Activated B cell treated with CpG ODN at 0.5 μM for 24 hours (primary cell): ENCODE measurements at regions of chr5 and their contacts with region 1.

Region 1: GRCh38 chr5:67209142-67209771 is 12.7 kb upstream of the CD180 start:
- DNase-seq: no peak
- ATAC-seq: peak; percentile 43
- H3K4me3 Mint-ChIP-seq: no peak overlapping the region
- H3K27ac Mint-ChIP-seq: peak overlapping the region; percentile 85
- H3K4me1 Mint-ChIP-seq: peaks cover 69% of the 10 kb centered on the region
- H3K27me3 Mint-ChIP-seq: no peaks in the 10 kb centered on the region
- CTCF ChIP-seq: no peak

Region 2: GRCh38 chr5:65925601-65926275 is 1283.5 kb before region 1 on chr5:
- CTCF ChIA-PET with region 1: no interaction called
- POLR2A ChIA-PET with region 1: no interaction called
- intact Hi-C with region 1: loop called (anchors 10 kb)
- DNase-seq: peak; percentile 82
- ATAC-seq: peak; percentile 73
- H3K4me3 Mint-ChIP-seq: peak overlapping the region; percentile 93
- H3K27ac Mint-ChIP-seq: peak overlapping the region; percentile 96
- H3K4me1 Mint-ChIP-seq: peaks cover 42% of the 10 kb centered on the region
- H3K27me3 Mint-ChIP-seq: no peaks in the 10 kb centered on the region
- CTCF ChIP-seq: no peak

Region 3: DNA sequence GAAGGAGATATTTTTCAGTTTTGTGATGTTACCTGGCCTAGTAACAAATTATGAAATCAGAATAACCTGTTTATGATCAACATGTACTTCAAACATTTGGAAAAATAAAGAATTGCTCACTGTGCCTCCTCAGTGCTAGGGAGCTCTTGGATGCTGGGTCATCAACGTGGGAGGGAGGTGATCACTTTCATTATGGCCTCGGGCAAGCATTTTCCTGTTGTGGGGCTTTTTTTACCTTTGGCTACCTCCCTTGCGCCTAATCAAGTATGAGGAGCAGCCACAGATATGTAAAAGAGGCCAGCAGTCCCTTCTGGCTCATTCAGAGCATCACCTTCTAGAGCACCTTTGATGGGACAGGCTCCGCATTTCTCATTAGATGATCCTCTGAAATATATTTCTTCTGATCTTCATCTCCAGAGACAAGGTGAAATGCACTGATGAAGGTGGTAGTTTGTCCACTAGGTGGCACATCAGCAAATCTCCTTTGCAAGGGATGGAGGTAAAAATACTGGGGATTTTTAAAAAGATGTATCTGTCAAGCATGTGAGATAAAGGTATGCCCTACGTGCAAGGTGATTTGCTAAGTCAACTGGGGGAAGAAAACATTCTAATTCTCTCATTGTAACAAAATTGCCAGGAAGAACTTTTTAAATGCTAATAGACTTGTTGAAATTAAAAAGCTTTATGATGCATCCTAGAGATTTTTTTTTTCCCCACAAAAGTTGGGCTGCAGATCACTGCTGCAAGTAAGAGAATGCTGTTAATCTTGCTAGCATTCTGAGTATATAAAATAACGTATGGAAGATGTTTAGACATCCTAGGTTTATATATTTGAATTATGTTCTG is 394.9 kb before region 1 on chr5:
- CTCF ChIA-PET with region 1: no interaction called
- POLR2A ChIA-PET with region 1: no interaction called
- intact Hi-C with region 1: loop called (anchors 1 kb)
- DNase-seq: no peak
- ATAC-seq: no peak
- H3K4me3 Mint-ChIP-seq: no peak overlapping the region
- H3K27ac Mint-ChIP-seq: no peak overlapping the region
- H3K4me1 Mint-ChIP-seq: peaks cover 11% of the 10 kb centered on the region
- H3K27me3 Mint-ChIP-seq: peaks cover 5% of the 10 kb centered on the region
- CTCF ChIP-seq: no peak

Region 4: GRCh38 chr5:67003935-67004729 is 205.1 kb before region 1 on chr5:
- CTCF ChIA-PET with region 1: no interaction called
- POLR2A ChIA-PET with region 1: interaction called, 4 read pairs
- intact Hi-C with region 1: loop called (anchors 2 kb)
- DNase-seq: peak; percentile 66
- ATAC-seq: peak; percentile 79
- H3K4me3 Mint-ChIP-seq: peak overlapping the region; percentile 87
- H3K27ac Mint-ChIP-seq: peak overlapping the region; percentile 72
- H3K4me1 Mint-ChIP-seq: peaks cover 30% of the 10 kb centered on the region
- H3K27me3 Mint-ChIP-seq: no peaks in the 10 kb centered on the region
- CTCF ChIP-seq: no peak

Region 5: DNA sequence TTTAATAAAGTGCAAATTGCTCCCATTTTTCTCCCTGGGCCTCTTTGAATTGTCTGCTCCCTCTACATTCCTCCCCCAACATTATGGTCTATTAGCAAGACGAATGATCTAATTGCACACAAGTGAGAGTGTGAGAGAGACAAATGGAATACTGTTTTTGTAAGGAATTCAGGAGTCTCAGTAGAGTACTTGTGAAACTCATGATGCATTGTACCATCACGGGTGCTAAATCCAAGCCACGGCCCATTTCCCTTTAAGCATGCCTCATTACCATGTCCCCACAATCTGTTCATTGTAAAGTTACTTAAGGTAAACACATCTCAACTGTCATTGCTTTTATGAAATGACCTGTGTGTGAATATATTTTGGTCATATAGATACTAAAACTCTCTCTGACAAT is 75.5 kb before region 1 on chr5:
- CTCF ChIA-PET with region 1: no interaction called
- POLR2A ChIA-PET with region 1: no interaction called
- intact Hi-C with region 1: no loop called
- DNase-seq: no peak
- ATAC-seq: no peak
- H3K4me3 Mint-ChIP-seq: no peak overlapping the region
- H3K27ac Mint-ChIP-seq: no peak overlapping the region
- H3K4me1 Mint-ChIP-seq: no peaks in the 10 kb centered on the region
- H3K27me3 Mint-ChIP-seq: no peaks in the 10 kb centered on the region
- CTCF ChIP-seq: no peak

Region 6: DNA sequence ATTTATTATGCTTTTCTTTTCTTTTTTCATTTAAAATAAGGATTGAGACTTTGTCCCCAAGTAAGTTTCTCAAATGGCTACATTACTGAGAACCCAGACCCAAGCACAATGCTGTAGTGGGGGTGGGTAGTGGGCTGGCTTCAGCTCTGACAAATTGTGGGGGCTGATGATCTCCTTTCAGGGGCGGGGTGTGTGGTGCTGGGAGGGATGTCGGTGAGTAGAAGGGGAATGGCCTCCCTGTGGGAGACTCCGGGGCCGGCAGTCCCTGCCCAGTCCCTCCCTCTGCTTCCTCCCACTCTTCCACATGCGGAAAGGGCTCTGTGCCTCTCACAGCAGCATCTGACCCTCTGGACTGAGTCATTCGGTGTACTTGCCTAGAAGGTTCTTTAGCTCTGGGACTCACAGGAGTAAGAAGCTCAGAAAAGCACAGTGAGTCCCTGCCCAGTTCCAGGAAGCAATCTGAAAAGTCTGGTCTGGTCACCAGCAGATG is 26.9 kb before region 1 on chr5:
- CTCF ChIA-PET with region 1: interaction called, 4 read pairs
- POLR2A ChIA-PET with region 1: interaction called, 4 read pairs
- intact Hi-C with region 1: loop called (anchors 1 kb)
- DNase-seq: no peak
- ATAC-seq: no peak
- H3K4me3 Mint-ChIP-seq: no peak overlapping the region
- H3K27ac Mint-ChIP-seq: peak overlapping the region; percentile 86
- H3K4me1 Mint-ChIP-seq: peaks cover 84% of the 10 kb centered on the region
- H3K27me3 Mint-ChIP-seq: no peaks in the 10 kb centered on the region
- CTCF ChIP-seq: no peak

Region 7: DNA sequence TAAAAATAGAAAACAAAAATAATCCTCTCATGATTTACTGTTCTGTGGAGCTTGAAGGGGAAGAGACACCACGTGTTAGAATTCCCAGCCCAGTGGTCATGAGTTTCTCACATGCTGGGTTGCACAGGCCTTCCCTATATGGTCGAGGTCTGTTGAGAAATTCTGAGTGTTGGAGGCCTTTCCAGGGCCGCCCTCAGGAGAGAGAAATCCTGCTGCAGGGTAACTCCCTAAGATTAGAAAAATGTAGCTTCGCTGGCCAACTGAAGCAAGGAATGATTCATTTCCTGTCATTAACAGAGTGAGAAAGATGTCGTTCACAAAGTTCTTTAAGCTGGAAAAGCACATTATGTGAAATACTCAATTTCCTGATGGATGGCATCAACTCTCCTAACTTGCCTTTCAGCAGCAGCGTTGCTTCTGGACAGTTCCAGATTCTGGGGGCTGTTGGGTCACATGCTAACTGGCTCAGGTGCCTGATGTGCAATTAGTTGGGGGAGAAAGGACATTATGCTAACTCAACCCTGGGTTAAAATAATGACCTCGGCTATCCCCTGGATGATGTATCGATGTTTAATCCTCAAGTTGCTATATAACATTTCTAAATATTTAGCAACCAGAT is 92.1 kb after region 1 on chr5:
- CTCF ChIA-PET with region 1: no interaction called
- POLR2A ChIA-PET with region 1: no interaction called
- intact Hi-C with region 1: no loop called
- DNase-seq: no peak
- ATAC-seq: no peak
- H3K4me3 Mint-ChIP-seq: no peak overlapping the region
- H3K27ac Mint-ChIP-seq: no peak overlapping the region
- H3K4me1 Mint-ChIP-seq: no peaks in the 10 kb centered on the region
- H3K27me3 Mint-ChIP-seq: no peaks in the 10 kb centered on the region
- CTCF ChIP-seq: no peak

Region 8: GRCh38 chr5:67315082-67315989 is 106.1 kb after region 1 on chr5:
- CTCF ChIA-PET with region 1: no interaction called
- POLR2A ChIA-PET with region 1: no interaction called
- intact Hi-C with region 1: loop called (anchors 1 kb)
- DNase-seq: no peak
- ATAC-seq: peak; percentile 79
- H3K4me3 Mint-ChIP-seq: peak overlapping the region; percentile 2
- H3K27ac Mint-ChIP-seq: peak overlapping the region; percentile 60
- H3K4me1 Mint-ChIP-seq: peaks cover 10% of the 10 kb centered on the region
- H3K27me3 Mint-ChIP-seq: peaks cover 1% of the 10 kb centered on the region
- CTCF ChIP-seq: no peak